ENCODE measurements at regions of chr6 and their contacts with region 1.

Region 1: GRCh38 chr6:24064082-24064481 is 61.9 kb upstream of the NRSN1 start:
- DNase-seq: no peak
- ATAC-seq: peak; percentile 38; the same call in 2 of the 3 replicates
- H3K4me3 ChIP-seq: no peak overlapping the region
- H3K27ac ChIP-seq: no peak overlapping the region
- H3K4me1 ChIP-seq: peaks cover 5% of the 10 kb centered on the region; the same call in 1 of the 2 replicates
- H3K27me3 ChIP-seq: no peaks in the 10 kb centered on the region
- CTCF ChIP-seq: peak; percentile 40 to 59 (median 41); a peak in 5 of 6 replicates
- EP300 ChIP-seq: no peak
- POLR2A ChIP-seq: no peak
- RAD21 ChIP-seq: peak; percentile 85

Region 2: GRCh38 chr6:24205020-24205492 is 141.0 kb after region 1 on chr6:
- CTCF ChIA-PET with region 1: interaction called, 16 read pairs
- POLR2A ChIA-PET with region 1: no interaction called
- RAD21 ChIA-PET with region 1: interaction called, 5 read pairs
- SMC1A ChIA-PET with region 1: interaction called, 4 read pairs
- in situ Hi-C with region 1: loop called (anchors 5 kb)
- intact Hi-C with region 1: loop called (anchors 1 kb)
- DNase-seq: peak; percentile 24
- ATAC-seq: peak; percentile 72
- H3K4me3 ChIP-seq: no peak overlapping the region
- H3K27ac ChIP-seq: no peak overlapping the region
- H3K4me1 ChIP-seq: no peaks in the 10 kb centered on the region
- H3K27me3 ChIP-seq: no peaks in the 10 kb centered on the region
- CTCF ChIP-seq: peak; percentile 43 to 67 (median 54); a peak in 5 of 6 replicates
- EP300 ChIP-seq: no peak
- POLR2A ChIP-seq: no peak
- RAD21 ChIP-seq: peak; percentile 87

Region 3: GRCh38 chr6:24274441-24275083 is 210.5 kb after region 1 on chr6:
- CTCF ChIA-PET with region 1: interaction called, 17 read pairs
- POLR2A ChIA-PET with region 1: no interaction called
- RAD21 ChIA-PET with region 1: interaction called, 4 read pairs
- SMC1A ChIA-PET with region 1: interaction called, 6 read pairs
- in situ Hi-C with region 1: loop called (anchors 5 kb)
- intact Hi-C with region 1: loop called (anchors 1 kb)
- DNase-seq: no peak
- ATAC-seq: no peak
- H3K4me3 ChIP-seq: no peak overlapping the region
- H3K27ac ChIP-seq: no peak overlapping the region
- H3K4me1 ChIP-seq: no peaks in the 10 kb centered on the region
- H3K27me3 ChIP-seq: no peaks in the 10 kb centered on the region
- CTCF ChIP-seq: peak; percentile 47 to 53 (median 49); a peak in 5 of 6 replicates
- EP300 ChIP-seq: no peak
- POLR2A ChIP-seq: no peak
- RAD21 ChIP-seq: peak; percentile 63

Region 4: DNA sequence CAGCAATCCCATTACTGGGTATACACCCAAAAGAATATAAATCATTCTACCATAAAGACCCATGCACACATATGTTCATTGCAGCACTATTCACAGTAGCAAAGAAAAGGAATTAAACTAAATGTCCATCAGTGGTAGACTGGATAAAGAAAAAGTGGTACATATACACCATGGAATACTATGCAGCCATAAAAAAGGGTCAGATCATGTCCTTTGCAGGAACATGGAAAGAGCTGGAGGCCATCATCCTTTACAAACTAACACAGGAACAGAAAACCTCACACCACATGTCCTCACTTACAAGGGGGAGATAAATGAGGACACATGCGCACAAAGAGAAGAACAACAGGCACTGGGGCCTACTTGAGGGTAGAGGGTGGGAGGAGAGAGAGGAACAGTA is 232.9 kb after region 1 on chr6:
- CTCF ChIA-PET with region 1: no interaction called
- POLR2A ChIA-PET with region 1: no interaction called
- RAD21 ChIA-PET with region 1: no interaction called
- SMC1A ChIA-PET with region 1: no interaction called
- in situ Hi-C with region 1: no loop called
- intact Hi-C with region 1: no loop called
- DNase-seq: no peak
- ATAC-seq: no peak
- H3K4me3 ChIP-seq: no peak overlapping the region
- H3K27ac ChIP-seq: no peak overlapping the region
- H3K4me1 ChIP-seq: no peaks in the 10 kb centered on the region
- H3K27me3 ChIP-seq: no peaks in the 10 kb centered on the region
- CTCF ChIP-seq: no peak
- EP300 ChIP-seq: no peak
- POLR2A ChIP-seq: no peak
- RAD21 ChIP-seq: no peak

Region 5: GRCh38 chr6:24374612-24375011 is 310.5 kb after region 1 on chr6:
- CTCF ChIA-PET with region 1: no interaction called
- POLR2A ChIA-PET with region 1: no interaction called
- RAD21 ChIA-PET with region 1: no interaction called
- SMC1A ChIA-PET with region 1: no interaction called
- in situ Hi-C with region 1: no loop called
- intact Hi-C with region 1: no loop called
- DNase-seq: no peak
- ATAC-seq: no peak
- H3K4me3 ChIP-seq: no peak overlapping the region
- H3K27ac ChIP-seq: no peak overlapping the region
- H3K4me1 ChIP-seq: peaks cover 7% of the 10 kb centered on the region
- H3K27me3 ChIP-seq: no peaks in the 10 kb centered on the region
- CTCF ChIP-seq: no peak
- EP300 ChIP-seq: no peak
- POLR2A ChIP-seq: no peak
- RAD21 ChIP-seq: no peak

Measured in GM12878 (cell line).